Posterior cingulate gyrus (tissue), 11 donors: ENCODE measurements at regions of chr20 and their contacts with region 1.

Region 1: DNA sequence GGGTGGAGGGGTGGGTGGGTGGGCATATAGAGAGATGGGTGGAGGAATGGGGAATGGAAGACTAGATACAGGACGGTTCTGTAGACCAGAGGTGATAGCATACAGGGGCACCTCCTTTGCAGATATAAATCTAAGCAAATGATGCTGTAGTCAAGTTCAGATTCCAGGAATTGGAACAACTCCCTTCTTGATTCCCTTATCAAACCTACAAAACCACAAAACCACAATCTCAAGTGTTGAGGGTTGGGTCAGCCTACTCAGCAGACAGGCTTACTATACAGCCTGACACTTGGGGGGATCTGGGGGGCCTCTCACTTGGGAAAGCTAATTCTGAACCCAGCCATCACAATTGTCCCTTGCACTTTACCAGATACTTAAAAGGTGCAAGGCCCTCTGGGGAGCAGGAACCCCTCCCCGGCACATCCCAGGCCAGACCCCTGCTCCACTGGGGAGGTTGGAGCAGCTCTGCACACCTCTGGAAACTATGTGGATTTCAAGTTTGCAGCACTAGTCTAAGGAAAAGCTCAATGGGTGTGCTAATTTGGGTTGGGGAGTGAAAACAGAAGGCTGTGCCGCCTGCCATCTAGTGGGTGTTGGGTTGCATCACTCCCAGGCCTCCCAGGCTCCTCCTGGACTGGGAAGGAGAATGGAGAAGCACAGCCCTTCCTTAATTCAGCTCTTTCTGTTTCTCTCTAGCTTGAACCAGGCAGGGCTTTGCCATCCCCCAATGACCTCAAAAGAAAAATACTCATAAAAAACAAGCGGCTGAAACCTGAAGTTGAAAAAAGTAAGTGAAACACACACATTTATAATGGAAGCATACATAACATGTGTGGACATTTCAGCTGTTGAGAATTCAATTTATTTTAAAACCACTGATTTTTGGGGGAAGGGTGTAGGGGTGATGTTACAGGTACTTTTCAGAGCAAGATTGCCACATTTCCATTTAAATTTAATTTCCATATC is 121.2 kb upstream of the LAMP5 start:
- DNase-seq: peak; percentile 37 to 95 (median 75)

Region 2: DNA sequence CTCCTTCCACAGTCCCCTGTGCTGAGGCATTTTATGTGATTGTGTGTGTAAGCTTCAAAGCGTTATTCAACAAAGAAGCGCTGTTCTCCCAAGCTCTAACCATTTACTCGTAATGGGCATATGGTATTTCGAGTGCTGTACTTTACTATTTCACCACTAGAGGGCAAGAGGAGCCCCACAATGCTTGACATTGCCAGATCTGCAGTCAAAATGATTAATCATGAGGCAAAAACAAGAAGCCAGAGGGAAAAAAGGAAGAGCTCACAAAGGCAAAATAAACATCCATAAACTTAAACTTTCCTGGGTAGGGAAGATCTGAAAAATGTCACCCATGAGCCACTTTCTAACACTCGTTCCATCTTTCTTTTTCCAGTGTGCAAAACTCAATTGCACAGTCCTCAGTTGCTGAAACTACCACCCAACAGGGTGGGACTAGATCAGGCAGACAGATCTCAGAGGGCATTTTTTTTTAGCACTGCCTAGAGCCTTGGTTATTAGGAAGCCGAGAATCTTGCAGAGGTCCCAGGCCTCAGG is 539.3 kb before region 1 on chr20:
- intact Hi-C with region 1: loop called (anchors 10 kb)
- DNase-seq: peak in 2 of 10 donors; percentile 12 to 14

Region 3: GRCh38 chr20:9417665-9418064 is 24.5 kb after region 1 on chr20:
- intact Hi-C with region 1: no loop called
- DNase-seq: no peak